ENCODE measurements at regions of chr6 and their contacts with region 1.

Region 1: DNA sequence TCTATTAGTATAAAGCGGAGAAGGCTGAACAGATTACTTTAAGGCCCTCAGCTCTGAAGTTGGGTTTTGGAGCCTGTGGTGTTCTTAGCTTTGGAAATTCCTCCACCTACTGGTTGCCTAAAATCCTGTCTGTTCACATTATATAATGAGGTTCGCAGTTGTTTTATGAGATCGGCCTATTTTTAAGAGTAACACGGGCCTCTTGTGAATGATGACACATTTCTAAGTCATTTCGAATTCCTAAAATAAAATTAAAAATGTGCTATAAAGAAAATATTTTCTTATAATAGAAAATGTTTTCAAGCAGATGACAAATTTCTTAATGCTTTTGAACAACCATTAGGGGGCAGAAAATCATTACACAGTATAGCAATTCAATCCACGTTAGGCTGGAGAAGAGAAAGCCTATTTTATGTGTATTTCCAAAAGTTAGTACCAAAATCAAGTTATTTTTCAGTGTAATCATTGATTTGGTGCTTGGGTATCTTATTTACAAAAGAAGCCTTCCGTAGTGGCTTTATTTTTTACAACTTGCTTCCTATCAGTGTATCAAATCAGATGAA is 15.8 kb upstream of the FAM8A1 start:
- DNase-seq: peak; percentile 79
- H3K4me3 ChIP-seq: peak overlapping the region in 2 of 4 donors; percentile 1 to 15
- H3K27ac ChIP-seq: peak overlapping the region; percentile 74 to 92 (median 80)
- H3K4me1 ChIP-seq: peaks cover 0 to 18% (median 11%) of the 10 kb centered on the region in 4 donors
- H3K27me3 ChIP-seq: no peaks in the 10 kb centered on the region
- CTCF ChIP-seq: peak; percentile 85 to 92 (median 90)
- EP300 ChIP-seq: no peak
- POLR2A ChIP-seq: no peak

Region 2: GRCh38 chr6:17015144-17015543 is 569.2 kb before region 1 on chr6:
- intact Hi-C with region 1: loop called (anchors 10 kb)
- DNase-seq: no peak
- H3K4me3 ChIP-seq: no peak overlapping the region
- H3K27ac ChIP-seq: peak overlapping the region in 2 of 4 donors; percentile 88 to 90
- H3K4me1 ChIP-seq: peaks cover 0 to 31% (median 16%) of the 10 kb centered on the region in 4 donors
- H3K27me3 ChIP-seq: no peaks in the 10 kb centered on the region
- CTCF ChIP-seq: no peak
- EP300 ChIP-seq: no peak
- POLR2A ChIP-seq: no peak

Region 3: DNA sequence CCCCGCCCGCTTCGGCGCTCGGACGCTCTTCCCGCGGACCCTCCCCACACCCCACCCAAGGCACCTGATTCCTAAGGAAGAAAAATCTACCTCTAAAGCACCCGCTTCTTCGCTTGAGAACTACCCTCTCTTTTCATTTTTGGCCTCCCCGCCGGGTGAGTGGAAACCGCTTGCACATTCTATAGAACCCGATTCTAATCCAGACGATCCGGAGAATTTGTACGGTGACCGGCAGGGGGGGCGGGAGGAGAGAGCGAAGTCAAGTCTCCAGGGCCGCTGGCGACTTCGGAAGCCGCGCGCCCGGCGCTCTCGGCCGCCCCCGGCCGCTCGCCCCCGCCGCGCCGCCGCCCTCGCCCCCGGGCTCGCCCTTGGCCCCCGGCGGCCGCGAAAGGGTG is 303.2 kb before region 1 on chr6 and contains the start of gene RBM24:
- intact Hi-C with region 1: loop called (anchors 2 kb)
- DNase-seq: peak; percentile 88
- H3K4me3 ChIP-seq: peak within 1 kb of the TSS; percentile 80 to 93 (median 89)
- H3K27ac ChIP-seq: peak within 1 kb of the TSS; percentile 92 to 95 (median 94)
- H3K4me1 ChIP-seq: peaks cover 0 to 77% (median 37%) of the 10 kb centered on the region in 4 donors
- H3K27me3 ChIP-seq: no peaks in the 10 kb centered on the region
- CTCF ChIP-seq: peak in 3 of 4 experiments; percentile 20 to 26 (median 25)
- EP300 ChIP-seq: no peak
- POLR2A ChIP-seq: no peak
- total RNA-seq, gene RBM24: 8.3 to 34.1 (median 15.1) TPM

Region 4: DNA sequence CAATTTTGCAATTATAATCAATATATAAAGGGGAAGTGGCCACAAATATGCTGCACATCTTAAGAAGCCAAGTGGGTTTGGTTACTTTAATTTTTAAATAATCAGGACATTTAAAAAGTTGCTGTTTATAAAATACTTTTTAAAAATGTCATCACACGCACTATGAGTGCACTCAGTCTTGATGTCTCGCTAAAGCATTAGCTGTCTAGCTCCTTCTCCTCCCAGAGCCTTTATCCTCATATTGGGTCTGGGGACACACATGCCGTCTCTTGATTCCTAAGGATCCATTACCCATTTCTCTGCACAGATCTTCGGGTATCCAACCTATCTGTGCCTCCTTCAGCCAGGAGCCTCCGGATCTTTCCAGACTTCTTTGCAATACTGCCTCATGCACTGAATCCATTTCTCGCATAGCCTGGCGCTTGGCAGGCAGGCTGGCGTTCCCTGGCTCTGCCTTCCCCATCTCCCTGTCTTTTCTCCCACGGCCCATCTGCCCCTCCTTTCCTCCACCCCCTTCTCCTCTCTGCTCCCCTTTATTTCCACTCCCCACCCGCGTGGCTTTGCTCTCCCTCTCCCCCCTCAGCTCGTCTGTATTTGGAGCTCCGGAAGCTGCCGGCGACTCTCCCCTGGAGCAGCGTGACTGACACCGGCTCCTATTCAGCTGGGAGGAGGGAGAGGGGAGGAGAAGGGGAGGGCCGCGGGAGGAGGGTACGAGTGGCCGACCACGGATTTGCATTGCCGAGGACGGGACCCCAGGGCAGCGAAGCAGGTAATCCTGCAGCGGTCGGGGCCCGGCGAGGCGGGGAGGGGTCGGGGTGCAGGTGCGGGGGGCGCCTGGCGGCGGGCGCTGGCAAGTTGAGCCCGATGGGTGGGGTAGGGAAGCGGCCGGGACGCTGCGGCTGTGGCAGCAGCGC is 191.1 kb before region 1 on chr6 and contains the start of gene CAP2:
- intact Hi-C with region 1: loop called (anchors 5 kb)
- DNase-seq: peak; percentile 93
- H3K4me3 ChIP-seq: peak within 1 kb of the TSS; percentile 78 to 96 (median 88)
- H3K27ac ChIP-seq: peak within 1 kb of the TSS; percentile 91 to 97 (median 94)
- H3K4me1 ChIP-seq: peaks cover 0 to 20% (median 13%) of the 10 kb centered on the region in 4 donors
- H3K27me3 ChIP-seq: no peaks in the 10 kb centered on the region
- CTCF ChIP-seq: no peak
- EP300 ChIP-seq: no peak
- POLR2A ChIP-seq: peak; percentile 35 to 44
- total RNA-seq, gene CAP2: 48.3 to 67.1 (median 55.6) TPM

Region 5: GRCh38 chr6:18122124-18123093 is 538.1 kb after region 1 on chr6 and contains the start of gene NHLRC1:
- intact Hi-C with region 1: loop called (anchors 5 kb)
- DNase-seq: peak; percentile 95
- H3K4me3 ChIP-seq: peak within 1 kb of the TSS; percentile 44 to 61 (median 52)
- H3K27ac ChIP-seq: peak within 1 kb of the TSS; percentile 42 to 62 (median 52)
- H3K4me1 ChIP-seq: peaks cover 0 to 13% (median 10%) of the 10 kb centered on the region in 4 donors
- H3K27me3 ChIP-seq: no peaks in the 10 kb centered on the region
- CTCF ChIP-seq: peak; percentile 85 to 97 (median 94)
- EP300 ChIP-seq: no peak
- POLR2A ChIP-seq: peak in 1 of 2 donors; percentile 25
- total RNA-seq, gene NHLRC1: 1.2 to 1.9 (median 1.5) TPM

Measured in sigmoid colon (tissue), 7 donors.